Activated CD4-positive, alpha-beta T cell treated with anti-CD3 and anti-CD28 coated beads, Interleukin-2, amount 10 ng/mL, durations not matched to agents 24 days and 14 days (primary cell): ENCODE measurements at regions of chr15 and their contacts with region 1.

Region 1: GRCh38 chr15:89334510-89335288 is at the start of gene POLG:
- DNase-seq: peak; percentile 100
- H3K4me3 Mint-ChIP-seq: peak within 1 kb of the TSS; percentile 87
- H3K27ac Mint-ChIP-seq: peak within 1 kb of the TSS; percentile 95
- H3K4me1 Mint-ChIP-seq: peaks cover 50% of the 10 kb centered on the region
- H3K27me3 Mint-ChIP-seq: peaks cover 9% of the 10 kb centered on the region
- total RNA-seq, gene POLG: 124 and 134 TPM in 2 replicates

Region 2: GRCh38 chr15:89575146-89575655 is 240.5 kb after region 1 on chr15 and contains the start of gene TICRR:
- intact Hi-C with region 1: loop called (anchors 10 kb)
- DNase-seq: peak; percentile 99
- H3K4me3 Mint-ChIP-seq: peak within 1 kb of the TSS; percentile 91
- H3K27ac Mint-ChIP-seq: peak within 1 kb of the TSS; percentile 88
- H3K4me1 Mint-ChIP-seq: peaks cover 29% of the 10 kb centered on the region
- H3K27me3 Mint-ChIP-seq: peaks cover 22% of the 10 kb centered on the region
- total RNA-seq, gene TICRR: 18.8 and 21.0 TPM in 2 replicates